Cardiac septum (tissue), 1 donor: ENCODE measurements at regions of chr15 and their contacts with region 1.

Region 1: DNA sequence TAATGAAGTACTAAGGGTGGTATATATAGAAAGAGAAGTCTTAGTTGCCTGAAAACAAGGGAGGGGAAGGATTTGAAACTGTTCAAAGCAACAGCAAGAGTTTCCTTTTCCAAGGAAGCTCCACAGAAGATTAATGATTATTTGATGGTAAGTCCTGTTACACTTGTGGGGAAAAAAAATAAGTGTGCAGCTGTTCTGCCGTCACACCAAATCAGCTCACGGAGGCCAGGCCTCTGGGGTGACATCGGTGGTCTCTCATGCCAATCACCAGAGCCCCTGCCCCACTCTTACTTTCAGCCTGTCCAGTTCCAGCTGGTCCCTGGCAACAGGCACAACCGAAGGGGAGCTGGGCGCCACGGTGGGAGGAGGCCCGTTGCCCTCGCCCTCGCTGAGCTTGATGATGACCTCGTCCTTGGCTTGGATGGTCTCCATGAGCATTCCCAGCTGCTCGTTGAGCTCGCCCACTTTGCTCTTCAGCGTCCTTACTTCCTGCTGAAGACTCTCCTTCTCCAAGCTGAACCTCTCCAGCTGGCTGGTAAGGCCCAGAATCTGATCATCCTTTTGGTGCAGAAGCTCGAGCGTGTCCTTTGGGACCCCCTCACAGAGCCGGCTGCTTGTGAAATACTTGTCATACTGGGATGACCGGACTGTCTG is 53.5 kb downstream of the TBC1D2B start:
- DNase-seq: no peak

Region 2: GRCh38 chr15:77786956-77787355 is 237.0 kb before region 1 on chr15:
- intact Hi-C with region 1: no loop called
- DNase-seq: no peak

Region 3: DNA sequence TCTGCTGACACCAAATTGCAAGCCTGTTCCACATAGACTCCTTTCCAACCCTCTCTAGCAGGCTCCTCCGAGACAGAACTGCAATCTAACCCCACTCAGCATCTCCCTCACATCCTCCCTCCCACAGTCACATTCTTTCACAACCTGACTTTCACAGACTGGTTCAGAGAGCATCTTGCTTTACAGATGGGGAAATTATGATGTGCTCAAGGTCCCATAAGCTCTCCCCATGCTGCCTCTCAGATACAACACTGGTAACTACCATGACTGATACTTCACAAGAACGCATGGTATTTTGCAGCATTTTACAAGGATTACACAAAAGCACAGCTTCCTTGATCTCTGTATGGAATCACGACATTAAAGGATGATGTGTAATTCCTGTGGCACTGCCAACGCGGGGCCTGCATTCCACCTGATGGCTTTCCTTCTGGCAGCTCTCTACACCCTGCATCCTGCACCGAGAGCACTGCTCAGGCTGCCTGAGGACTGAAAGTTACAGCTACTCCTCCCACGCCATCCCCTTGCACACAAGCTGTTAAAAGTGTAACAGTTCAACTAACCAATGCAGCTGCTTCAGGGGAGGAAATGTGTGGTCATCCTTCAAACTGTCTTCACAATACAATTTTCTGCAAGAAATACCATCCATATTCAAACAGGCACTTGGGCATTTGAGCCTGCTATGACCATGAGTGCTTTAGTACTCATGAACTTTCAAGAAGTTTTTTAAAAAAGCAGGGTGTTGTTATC is 25.9 kb after region 1 on chr15:
- intact Hi-C with region 1: no loop called
- DNase-seq: no peak

Region 4: GRCh38 chr15:78065284-78065872 is 41.4 kb after region 1 on chr15:
- intact Hi-C with region 1: loop called (anchors 1 kb)
- DNase-seq: no peak

Region 5: DNA sequence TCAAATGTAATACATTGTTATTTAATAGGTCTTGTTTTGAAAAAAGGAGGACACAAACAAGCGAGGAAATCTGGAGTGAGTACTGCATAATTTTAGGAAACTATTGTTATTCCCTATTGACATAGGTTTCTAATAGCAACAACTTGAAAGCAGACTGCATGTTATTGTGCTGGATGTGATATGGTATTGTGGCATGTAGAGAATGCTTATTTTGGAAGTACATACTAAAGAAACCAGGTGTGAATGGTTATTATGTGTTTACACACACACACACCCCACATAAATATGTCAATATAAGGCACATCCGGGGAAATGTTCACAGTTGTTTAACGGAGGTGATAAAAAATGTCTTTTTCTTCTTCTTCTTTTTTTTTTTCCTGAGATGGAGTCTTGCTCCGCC is 842.8 kb after region 1 on chr15:
- intact Hi-C with region 1: no loop called
- DNase-seq: no peak